ENCODE measurements at regions of chr6 and their contacts with region 1.

Region 1: GRCh38 chr6:26473758-26474438 is 16.1 kb downstream of the BTN2A1 start:
- DNase-seq: peak; percentile 78
- H3K4me3 Mint-ChIP-seq: peak overlapping the region; percentile 99
- H3K27ac Mint-ChIP-seq: peak overlapping the region; percentile 100
- H3K4me1 Mint-ChIP-seq: peaks cover 46% of the 10 kb centered on the region
- H3K27me3 Mint-ChIP-seq: no peaks in the 10 kb centered on the region

Region 2: GRCh38 chr6:26383624-26384417 is 90.1 kb before region 1 on chr6:
- intact Hi-C with region 1: loop called (anchors 1 kb)
- DNase-seq: no peak
- H3K4me3 Mint-ChIP-seq: peak overlapping the region; percentile 95
- H3K27ac Mint-ChIP-seq: peak overlapping the region; percentile 90
- H3K4me1 Mint-ChIP-seq: peaks cover 57% of the 10 kb centered on the region
- H3K27me3 Mint-ChIP-seq: no peaks in the 10 kb centered on the region

Region 3: GRCh38 chr6:26439657-26440056 is 34.2 kb before region 1 on chr6:
- intact Hi-C with region 1: loop called (anchors 1 kb)
- DNase-seq: no peak
- H3K4me3 Mint-ChIP-seq: peak overlapping the region; percentile 87
- H3K27ac Mint-ChIP-seq: peak overlapping the region; percentile 92
- H3K4me1 Mint-ChIP-seq: peaks cover 40% of the 10 kb centered on the region
- H3K27me3 Mint-ChIP-seq: no peaks in the 10 kb centered on the region

Region 4: GRCh38 chr6:26493258-26493657 is 19.4 kb after region 1 on chr6:
- intact Hi-C with region 1: loop called (anchors 1 kb)
- DNase-seq: no peak
- H3K4me3 Mint-ChIP-seq: peak overlapping the region; percentile 49
- H3K27ac Mint-ChIP-seq: no peak overlapping the region
- H3K4me1 Mint-ChIP-seq: peaks cover 45% of the 10 kb centered on the region
- H3K27me3 Mint-ChIP-seq: peaks cover 8% of the 10 kb centered on the region

Region 5: DNA sequence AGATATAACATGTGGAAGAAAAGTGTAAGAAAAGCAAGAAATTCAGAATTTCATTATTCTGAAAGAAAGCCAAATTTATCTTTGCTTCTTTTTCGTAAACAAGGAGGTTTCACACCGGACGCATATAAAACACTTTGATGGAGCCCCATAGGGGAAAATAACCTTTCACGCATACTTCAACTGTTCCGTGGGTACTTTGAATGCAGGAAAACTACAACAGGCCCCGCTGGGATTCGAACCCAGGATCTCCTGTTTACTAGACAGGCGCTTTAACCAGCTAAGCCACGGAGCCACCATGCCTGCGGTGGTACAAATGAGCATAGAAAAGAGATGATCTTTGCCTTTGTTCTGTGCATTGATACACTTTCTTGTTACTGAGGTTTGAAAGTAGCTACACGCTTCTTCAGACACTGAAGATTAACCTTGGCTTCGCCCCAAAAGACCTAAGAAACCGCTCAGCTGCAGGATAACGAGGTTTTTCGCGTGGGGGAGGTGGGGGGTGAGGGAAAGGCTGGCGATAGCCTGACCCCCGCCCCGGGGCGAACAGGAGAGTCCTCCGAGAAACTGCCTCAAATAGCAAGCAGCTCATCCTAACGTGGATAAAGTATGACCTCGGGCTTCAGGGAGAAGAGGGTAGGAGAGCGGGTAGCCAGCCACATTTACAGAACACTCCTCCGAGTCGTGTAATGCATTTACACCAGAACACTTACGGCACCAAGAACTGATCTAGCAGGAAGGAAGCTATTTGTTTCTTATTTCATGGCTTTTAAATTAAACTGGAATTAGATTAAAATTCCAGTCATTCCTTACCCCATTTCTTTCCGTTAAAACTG is 59.0 kb after region 1 on chr6:
- intact Hi-C with region 1: loop called (anchors 1 kb)
- DNase-seq: peak; percentile 86
- H3K4me3 Mint-ChIP-seq: peak overlapping the region; percentile 94
- H3K27ac Mint-ChIP-seq: peak overlapping the region; percentile 95
- H3K4me1 Mint-ChIP-seq: peaks cover 46% of the 10 kb centered on the region
- H3K27me3 Mint-ChIP-seq: peaks cover 3% of the 10 kb centered on the region

Region 6: DNA sequence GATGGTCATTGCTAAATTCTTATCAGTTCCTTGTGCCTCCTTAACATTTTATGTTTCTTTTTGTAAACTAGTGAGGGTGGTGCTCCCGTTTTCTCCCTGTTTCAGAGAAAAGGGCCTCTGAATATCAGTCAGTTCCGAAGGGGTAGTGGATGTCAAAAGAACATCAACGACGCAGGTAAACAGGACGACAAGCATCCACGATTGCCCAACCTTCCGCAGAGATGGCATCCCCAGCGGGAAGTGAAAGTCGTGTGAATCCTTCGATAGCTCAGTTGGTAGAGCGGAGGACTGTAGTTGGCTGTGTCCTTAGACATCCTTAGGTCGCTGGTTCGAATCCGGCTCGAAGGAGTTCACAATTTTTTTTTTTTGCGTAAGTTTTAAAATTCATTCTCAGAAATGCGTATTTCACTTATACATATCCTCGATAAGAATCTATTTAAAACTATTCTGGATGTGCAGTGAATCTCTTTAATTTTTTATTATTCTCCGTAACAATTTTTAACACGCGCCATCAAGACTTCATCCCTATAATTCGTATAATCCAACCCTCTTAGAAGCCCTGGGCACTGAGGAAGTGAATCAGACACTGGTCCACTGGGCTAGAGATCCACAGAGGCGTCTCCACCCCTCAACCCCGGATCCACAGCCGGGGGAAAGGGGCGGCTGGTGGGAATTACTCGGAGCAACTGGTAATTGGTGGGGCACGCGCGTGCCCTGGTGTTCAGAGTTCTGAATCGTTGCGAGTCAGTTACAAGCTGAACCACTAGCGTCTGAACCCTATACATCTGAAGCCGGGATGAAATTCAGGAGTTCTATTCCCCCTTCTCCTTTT is 94.9 kb after region 1 on chr6:
- intact Hi-C with region 1: loop called (anchors 1 kb)
- DNase-seq: peak; percentile 94
- H3K4me3 Mint-ChIP-seq: peak overlapping the region; percentile 93
- H3K27ac Mint-ChIP-seq: peak overlapping the region; percentile 98
- H3K4me1 Mint-ChIP-seq: peaks cover 47% of the 10 kb centered on the region
- H3K27me3 Mint-ChIP-seq: peaks cover 5% of the 10 kb centered on the region